CD8-positive, alpha-beta memory T cell (primary cell): ENCODE measurements at regions of chr21 and their contacts with region 1.

Region 1: GRCh38 chr21:33185852-33186251 is 43.9 kb upstream of the IFNAR2 start:
- DNase-seq: peak in 2 of 5 donors; percentile 45 to 52
- H3K4me3 ChIP-seq: peak overlapping the region; percentile 45
- H3K4me3 Mint-ChIP-seq: peak overlapping the region in 6 of 7 donors; percentile 50 to 80 (median 58)
- H3K27ac ChIP-seq: no peak overlapping the region
- H3K27ac Mint-ChIP-seq: peak overlapping the region; percentile 11 to 93 (median 64)
- H3K4me1 ChIP-seq: peaks cover 28% of the 10 kb centered on the region
- H3K4me1 Mint-ChIP-seq: peaks cover 28 to 37% (median 32%) of the 10 kb centered on the region in 3 donors
- H3K27me3 ChIP-seq: no peaks in the 10 kb centered on the region
- H3K27me3 Mint-ChIP-seq: no peaks in the 10 kb centered on the region

Region 2: DNA sequence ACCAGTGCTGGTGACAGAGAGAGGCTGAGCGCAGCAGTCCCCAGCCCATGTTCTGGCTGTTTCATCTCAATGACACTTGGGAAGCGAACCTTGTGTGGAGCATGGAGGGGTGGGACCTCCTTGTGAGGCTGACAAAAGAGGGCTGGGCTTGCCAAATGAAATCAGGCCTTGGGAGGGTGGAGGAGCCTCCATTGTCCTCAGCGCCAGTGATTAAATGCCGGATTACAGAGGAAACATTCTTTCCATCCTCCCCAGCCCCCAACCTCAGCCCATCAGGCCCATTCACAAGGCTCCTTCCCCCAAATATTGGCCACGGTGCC is 351.0 kb before region 1 on chr21:
- CTCF ChIA-PET with region 1: no interaction called
- POLR2A ChIA-PET with region 1: interaction called, 11 read pairs
- DNase-seq: no peak
- H3K4me3 ChIP-seq: no peak overlapping the region
- H3K4me3 Mint-ChIP-seq: no peak overlapping the region
- H3K27ac ChIP-seq: no peak overlapping the region
- H3K27ac Mint-ChIP-seq: no peak overlapping the region
- H3K4me1 ChIP-seq: no peaks in the 10 kb centered on the region
- H3K4me1 Mint-ChIP-seq: no peaks in the 10 kb centered on the region
- H3K27me3 ChIP-seq: no peaks in the 10 kb centered on the region
- H3K27me3 Mint-ChIP-seq: peaks cover 13 to 22% of the 10 kb centered on the region in 2 donors

Region 3: GRCh38 chr21:33135925-33136324 is 49.9 kb before region 1 on chr21:
- CTCF ChIA-PET with region 1: no interaction called
- POLR2A ChIA-PET with region 1: no interaction called
- DNase-seq: no peak
- H3K4me3 ChIP-seq: no peak overlapping the region
- H3K4me3 Mint-ChIP-seq: no peak overlapping the region
- H3K27ac ChIP-seq: no peak overlapping the region
- H3K27ac Mint-ChIP-seq: no peak overlapping the region
- H3K4me1 ChIP-seq: no peaks in the 10 kb centered on the region
- H3K4me1 Mint-ChIP-seq: no peaks in the 10 kb centered on the region
- H3K27me3 ChIP-seq: no peaks in the 10 kb centered on the region
- H3K27me3 Mint-ChIP-seq: peaks cover 7 to 36% of the 10 kb centered on the region in 2 donors